Right ventricle myocardium inferior (tissue), 1 donor: ENCODE measurements at regions of chr12 and their contacts with region 1.

Region 1: GRCh38 chr12:98126637-98127335 is 388.6 kb upstream of the TMPO start:
- DNase-seq: peak; percentile 48
- ATAC-seq: no peak

Region 2: DNA sequence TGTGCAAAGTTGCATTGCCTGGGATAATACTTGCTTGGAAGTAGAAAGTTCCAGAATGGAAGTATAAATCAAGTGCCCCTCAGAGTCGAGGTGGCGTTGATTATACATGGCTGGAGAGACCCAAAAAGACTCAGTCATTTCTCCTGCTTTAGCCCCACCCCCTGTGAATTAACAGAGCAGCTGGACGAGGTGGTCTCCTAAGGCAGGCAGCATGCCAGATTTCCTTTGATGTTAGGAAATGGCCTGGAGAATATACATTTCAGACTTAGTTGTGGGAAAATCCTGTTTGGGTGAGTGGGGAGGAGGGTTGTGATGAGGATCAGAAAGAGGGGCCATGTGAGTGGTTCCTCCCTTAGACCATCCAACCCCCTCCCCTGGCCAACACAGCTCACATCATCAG is 17.5 kb before region 1 on chr12:
- intact Hi-C with region 1: no loop called
- DNase-seq: no peak
- ATAC-seq: no peak

Region 3: DNA sequence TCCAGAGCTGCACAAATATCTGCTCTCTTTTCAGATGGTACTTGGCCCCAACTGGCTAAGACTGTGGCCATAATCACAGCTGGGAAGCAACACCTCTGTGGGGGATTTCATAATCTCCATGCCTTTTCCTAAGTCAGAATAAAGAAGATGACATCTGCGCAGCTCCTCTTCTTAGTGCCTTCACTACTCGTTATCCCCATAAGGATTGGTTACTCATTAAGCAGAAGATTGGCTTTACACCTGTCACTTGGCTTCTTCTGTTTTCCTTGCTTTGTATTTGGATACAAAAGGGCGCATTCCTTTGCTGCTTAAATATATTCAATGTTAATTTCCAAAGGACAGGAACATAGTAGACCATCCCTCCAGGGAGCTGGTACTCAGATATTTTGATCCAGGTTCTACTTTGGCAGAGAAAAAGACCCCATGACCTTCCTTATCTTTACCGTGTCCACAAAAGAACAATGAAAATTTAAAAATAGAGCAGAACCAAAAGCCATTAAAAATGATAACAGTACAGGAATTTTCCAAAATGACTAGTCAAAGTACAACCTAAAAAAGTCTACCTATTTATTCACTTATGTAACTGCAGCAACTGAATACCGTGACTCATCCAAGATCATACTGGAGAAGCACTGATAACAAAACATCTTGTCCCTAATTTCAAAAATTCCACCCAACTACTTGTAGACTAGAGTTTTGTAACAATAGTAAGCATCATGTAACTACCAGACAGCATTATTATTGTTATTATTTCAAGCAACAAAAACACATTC is 36.3 kb after region 1 on chr12:
- intact Hi-C with region 1: loop called (anchors 5 kb)
- DNase-seq: no peak
- ATAC-seq: peak; percentile 28

Region 4: DNA sequence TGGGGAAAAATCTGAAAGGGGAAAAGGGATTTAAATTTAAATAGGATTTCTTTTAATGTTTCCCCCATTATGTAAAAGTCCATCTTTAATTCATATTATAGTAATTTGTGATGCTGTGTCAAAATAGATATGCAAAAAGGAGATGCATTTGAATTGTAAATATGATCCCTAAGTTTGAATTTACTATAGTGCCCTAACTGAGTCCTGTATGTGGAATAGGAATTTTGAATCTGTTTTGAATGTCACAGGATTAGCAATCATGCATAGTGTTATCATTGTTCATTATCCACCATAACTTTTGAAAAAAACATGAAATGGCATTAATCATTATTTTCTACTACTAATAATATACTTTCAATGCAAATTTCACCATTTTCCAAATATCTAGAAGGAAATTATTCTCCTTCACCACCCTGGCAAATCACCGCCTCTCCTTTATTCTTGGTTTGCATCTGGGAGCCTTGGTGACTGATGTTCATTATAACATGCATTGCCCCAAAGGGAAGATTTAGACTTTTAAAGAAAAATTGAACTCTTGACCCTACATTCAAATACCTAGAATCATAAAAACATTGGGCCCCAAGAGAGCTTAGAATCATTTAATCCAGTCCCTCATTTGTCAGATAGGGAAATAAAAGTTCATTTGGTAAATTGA is 47.1 kb after region 1 on chr12:
- intact Hi-C with region 1: no loop called
- DNase-seq: no peak
- ATAC-seq: no peak

Region 5: DNA sequence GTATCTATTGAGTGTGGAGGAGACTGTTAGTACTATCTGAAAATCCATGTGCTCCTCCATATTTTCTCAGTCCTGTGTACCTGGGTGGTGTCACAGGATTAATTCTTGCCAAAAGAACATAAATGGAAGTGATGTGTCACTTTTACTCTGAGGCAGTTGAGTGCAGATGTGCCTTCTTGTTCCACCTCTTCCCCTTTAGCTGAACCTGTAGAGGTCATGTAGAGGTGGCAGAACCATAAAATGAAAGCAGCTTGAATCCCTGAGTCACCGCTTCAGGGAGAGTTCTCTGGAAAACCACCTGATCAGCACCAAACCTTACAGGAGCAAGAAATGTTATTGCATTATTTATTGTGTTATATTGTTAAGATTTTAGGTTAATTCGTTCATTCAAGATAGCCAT is 452.0 kb after region 1 on chr12:
- intact Hi-C with region 1: no loop called
- DNase-seq: no peak
- ATAC-seq: no peak